ENCODE measurements at regions of chr1 and their contacts with region 1.

Region 1: DNA sequence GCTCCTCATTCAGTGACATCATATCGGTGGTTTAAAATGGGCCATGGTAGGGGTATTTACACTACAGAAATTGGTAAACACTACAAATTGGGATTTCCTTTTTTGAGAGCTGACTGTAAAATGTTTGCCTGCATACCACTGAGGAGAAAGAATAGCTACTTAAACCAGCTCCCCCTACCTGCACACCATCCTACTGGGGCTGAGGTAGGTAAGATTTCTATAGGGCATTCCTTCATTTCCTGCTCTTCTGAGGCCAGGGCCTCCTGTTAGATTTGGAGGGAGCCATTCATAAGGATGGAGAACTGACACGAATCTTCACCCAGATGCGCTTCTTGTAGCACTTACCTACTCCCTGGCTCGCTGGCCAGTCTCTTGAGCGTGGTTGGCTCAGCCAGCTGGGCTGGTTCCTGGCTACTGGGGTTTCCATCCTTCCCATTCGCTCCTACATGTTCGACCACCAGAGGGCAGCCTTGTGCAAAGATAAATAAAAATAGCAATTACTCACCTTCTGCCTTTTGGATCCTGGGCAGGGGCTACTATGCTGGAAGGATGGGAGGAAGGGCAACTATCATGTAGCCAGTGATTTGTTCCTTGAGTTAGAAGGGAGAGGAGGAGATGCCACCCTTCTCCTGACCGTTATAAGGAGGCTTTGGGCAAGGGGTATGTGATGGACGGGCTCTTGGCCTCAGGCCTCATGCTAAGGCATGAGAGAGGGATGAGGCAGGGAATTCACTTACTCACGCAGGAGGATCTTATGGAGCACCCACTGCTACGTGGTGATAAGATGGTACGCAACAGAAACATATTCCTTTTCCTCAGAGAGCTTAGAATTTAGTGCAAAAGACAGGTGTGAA is 10.7 kb downstream of the OPTC start:
- DNase-seq: peak; percentile 44 to 76 (median 64)
- ATAC-seq: peak; percentile 69
- H3K4me3 ChIP-seq: no peak overlapping the region
- H3K4me3 Mint-ChIP-seq: no peak overlapping the region
- H3K27ac ChIP-seq: no peak overlapping the region
- H3K27ac Mint-ChIP-seq: peak overlapping the region in 2 of 9 donors; percentile 7 to 38
- H3K4me1 ChIP-seq: no peaks in the 10 kb centered on the region
- H3K4me1 Mint-ChIP-seq: peaks cover 0 to 12% (median 8%) of the 10 kb centered on the region in 7 donors
- H3K27me3 ChIP-seq: no peaks in the 10 kb centered on the region
- H3K27me3 Mint-ChIP-seq: peaks cover 0 to 20% (median 0%) of the 10 kb centered on the region in 5 donors

Region 2: DNA sequence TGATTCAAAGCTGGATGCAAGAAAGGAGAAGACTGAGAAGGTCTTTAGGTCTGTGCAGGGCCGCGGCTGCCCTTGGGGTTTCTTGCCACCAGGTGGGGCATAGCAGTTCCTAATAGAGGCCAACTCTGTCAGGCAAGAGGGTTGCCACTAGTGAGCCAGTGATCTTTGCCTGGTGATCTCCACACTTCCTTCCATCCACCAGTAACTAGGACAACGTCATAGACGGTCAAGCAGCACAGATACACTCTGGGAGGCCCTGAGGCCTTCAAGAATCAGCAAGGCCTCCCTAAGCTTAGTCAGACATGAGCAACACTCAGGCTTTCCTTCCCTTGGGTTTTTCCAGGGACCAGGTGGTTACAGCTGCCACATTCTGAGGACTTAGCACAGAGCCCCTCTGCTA is 89.1 kb after region 1 on chr1:
- CTCF ChIA-PET with region 1: interaction called, 11 read pairs
- POLR2A ChIA-PET with region 1: no interaction called
- intact Hi-C with region 1: loop called in 1 of 2 experiments (anchors 1 kb)
- DNase-seq: peak in 7 of 9 donors; percentile 17 to 42 (median 25)
- ATAC-seq: peak; percentile 79
- H3K4me3 ChIP-seq: no peak overlapping the region
- H3K4me3 Mint-ChIP-seq: no peak overlapping the region
- H3K27ac ChIP-seq: no peak overlapping the region
- H3K27ac Mint-ChIP-seq: peak overlapping the region in 4 of 9 donors; percentile 20 to 70 (median 50)
- H3K4me1 ChIP-seq: no peaks in the 10 kb centered on the region
- H3K4me1 Mint-ChIP-seq: peaks cover 0 to 32% (median 7%) of the 10 kb centered on the region in 7 donors
- H3K27me3 ChIP-seq: no peaks in the 10 kb centered on the region
- H3K27me3 Mint-ChIP-seq: peaks cover 0 to 4% (median 0%) of the 10 kb centered on the region in 5 donors

Region 3: DNA sequence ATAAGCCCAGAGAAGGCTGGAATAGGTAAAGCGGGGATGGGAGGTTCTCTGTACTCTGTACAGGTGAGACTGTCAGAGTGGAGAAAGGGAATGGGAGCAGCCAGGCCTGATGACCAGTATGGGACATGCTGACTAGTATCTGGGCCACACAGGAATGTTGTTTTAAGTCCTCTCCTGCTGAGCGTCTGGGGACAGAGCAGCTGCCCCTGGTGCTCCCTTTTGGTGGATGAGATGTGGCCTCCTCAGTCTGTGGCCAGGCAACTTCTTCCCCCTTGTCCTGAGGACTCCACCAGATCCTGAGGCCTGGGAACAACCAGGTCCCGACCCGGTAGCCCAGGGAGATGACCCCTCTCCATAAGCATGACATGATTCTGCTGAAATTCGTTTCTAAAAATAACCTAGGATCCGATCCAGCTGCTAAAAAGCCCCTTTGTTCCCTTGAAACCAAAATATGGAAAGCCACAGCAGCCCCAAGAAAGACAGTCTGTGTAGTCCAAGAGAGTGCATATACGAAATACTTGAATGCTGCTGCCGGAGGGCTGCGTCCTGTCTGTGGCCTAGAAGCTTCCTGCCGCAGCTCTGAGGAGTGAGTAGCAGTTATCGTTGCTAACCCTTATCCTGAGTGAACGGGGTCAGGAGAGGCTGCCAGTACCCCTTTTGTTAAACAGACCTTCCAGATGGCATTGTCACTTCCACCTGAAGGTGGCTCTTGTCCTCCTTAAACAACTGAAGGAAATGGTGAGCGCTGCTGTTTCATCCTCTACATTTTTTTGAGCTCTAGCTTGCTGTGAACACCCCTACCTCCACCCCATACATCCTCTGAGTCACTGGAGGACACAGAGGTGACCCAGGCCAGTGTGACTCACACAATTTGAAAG is 169.2 kb after region 1 on chr1:
- CTCF ChIA-PET with region 1: interaction called, 6 read pairs
- POLR2A ChIA-PET with region 1: no interaction called
- intact Hi-C with region 1: loop called in 1 of 2 experiments (anchors 1 kb)
- DNase-seq: peak; percentile 27 to 79 (median 73)
- ATAC-seq: peak; percentile 91
- H3K4me3 ChIP-seq: no peak overlapping the region
- H3K4me3 Mint-ChIP-seq: peak overlapping the region; percentile 57 to 87 (median 77)
- H3K27ac ChIP-seq: peak overlapping the region; percentile 53
- H3K27ac Mint-ChIP-seq: peak overlapping the region; percentile 87 to 99 (median 95)
- H3K4me1 ChIP-seq: peaks cover 52 to 54% of the 10 kb centered on the region in 2 donors
- H3K4me1 Mint-ChIP-seq: peaks cover 50 to 81% (median 71%) of the 10 kb centered on the region in 7 donors
- H3K27me3 ChIP-seq: no peaks in the 10 kb centered on the region
- H3K27me3 Mint-ChIP-seq: no peaks in the 10 kb centered on the region

Region 4: GRCh38 chr1:203776636-203777035 is 272.0 kb after region 1 on chr1:
- CTCF ChIA-PET with region 1: interaction called, 3 read pairs
- POLR2A ChIA-PET with region 1: no interaction called
- intact Hi-C with region 1: loop called in 1 of 2 experiments (anchors 1 kb)
- DNase-seq: no peak
- ATAC-seq: peak; percentile 40
- H3K4me3 ChIP-seq: no peak overlapping the region
- H3K4me3 Mint-ChIP-seq: peak overlapping the region in 1 of 10 donors; percentile 31
- H3K27ac ChIP-seq: no peak overlapping the region
- H3K27ac Mint-ChIP-seq: peak overlapping the region in 8 of 9 donors; percentile 22 to 85 (median 50)
- H3K4me1 ChIP-seq: no peaks in the 10 kb centered on the region
- H3K4me1 Mint-ChIP-seq: peaks cover 0 to 16% (median 7%) of the 10 kb centered on the region in 7 donors
- H3K27me3 ChIP-seq: no peaks in the 10 kb centered on the region
- H3K27me3 Mint-ChIP-seq: no peaks in the 10 kb centered on the region

Region 5: GRCh38 chr1:204128964-204129896 is 624.6 kb after region 1 on chr1:
- CTCF ChIA-PET with region 1: interaction called, 5 read pairs
- POLR2A ChIA-PET with region 1: no interaction called
- intact Hi-C with region 1: loop called in 1 of 2 experiments (anchors 2 kb)
- DNase-seq: peak; percentile 19 to 70 (median 48)
- ATAC-seq: peak; percentile 84
- H3K4me3 ChIP-seq: no peak overlapping the region
- H3K4me3 Mint-ChIP-seq: peak overlapping the region in 5 of 10 donors; percentile 13 to 47 (median 24)
- H3K27ac ChIP-seq: no peak overlapping the region
- H3K27ac Mint-ChIP-seq: peak overlapping the region in 1 of 9 donors; percentile 48
- H3K4me1 ChIP-seq: no peaks in the 10 kb centered on the region
- H3K4me1 Mint-ChIP-seq: peaks cover 0 to 12% (median 9%) of the 10 kb centered on the region in 7 donors
- H3K27me3 ChIP-seq: no peaks in the 10 kb centered on the region
- H3K27me3 Mint-ChIP-seq: no peaks in the 10 kb centered on the region